Prostate gland (tissue), 2 donors: ENCODE measurements at regions of chr1 and their contacts with region 1.

Region 1: DNA sequence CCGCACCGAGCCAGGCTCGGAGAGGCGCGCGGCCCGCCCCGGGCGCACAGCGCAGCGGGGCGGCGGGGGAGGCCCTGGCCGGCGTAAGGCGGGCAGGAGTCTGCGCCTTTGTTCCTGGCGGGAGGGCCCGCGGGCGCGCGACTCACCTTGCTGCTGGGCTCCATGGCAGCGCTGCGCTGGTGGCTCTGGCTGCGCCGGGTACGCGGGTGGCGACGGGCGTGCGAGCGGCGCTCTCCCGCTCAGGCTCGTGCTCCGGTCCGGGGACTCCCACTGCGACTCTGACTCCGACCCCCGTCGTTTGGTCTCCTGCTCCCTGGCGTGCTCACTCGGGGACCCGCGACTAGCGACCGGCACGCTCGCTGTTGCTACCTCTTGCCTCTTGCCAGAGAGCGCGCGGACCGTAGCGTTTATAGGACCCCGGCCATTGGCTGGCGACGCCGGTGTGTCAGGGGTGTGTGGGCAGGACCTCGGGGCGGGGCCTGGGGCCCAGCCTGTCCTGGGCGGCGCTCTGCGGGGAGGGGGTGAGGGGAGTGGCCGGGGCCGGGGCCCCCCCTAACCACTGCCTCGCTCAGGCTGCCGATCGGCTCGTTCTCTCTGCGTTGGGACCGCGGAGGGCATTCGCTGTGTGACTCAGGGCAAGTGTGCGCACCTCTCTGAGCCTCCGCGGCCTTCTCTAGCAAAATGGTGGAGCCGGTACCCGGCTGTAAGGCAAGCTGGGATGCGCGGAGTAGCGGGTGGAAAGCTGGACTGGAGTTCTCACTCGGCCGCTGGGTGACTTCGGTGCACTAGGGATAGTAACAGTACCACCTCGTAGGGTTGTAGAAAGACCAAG is at the start of gene SLC2A1:
- DNase-seq: peak; percentile 95
- H3K4me3 ChIP-seq: peak within 1 kb of the TSS; percentile 80 to 87
- H3K27ac ChIP-seq: peak within 1 kb of the TSS; percentile 86 to 93
- H3K4me1 ChIP-seq: peaks cover 2% of the 10 kb centered on the region
- H3K27me3 ChIP-seq: no peaks in the 10 kb centered on the region
- CTCF ChIP-seq: peak in 2 of 4 experiments; percentile 6 to 11
- POLR2A ChIP-seq: peak; percentile 99
- total RNA-seq, gene SLC2A1: 83.9 to 159 TPM

Region 2: GRCh38 chr1:42924082-42924850 is 34.4 kb before region 1 on chr1:
- intact Hi-C with region 1: loop called (anchors 2 kb)
- DNase-seq: peak; percentile 92
- H3K4me3 ChIP-seq: peak overlapping the region; percentile 73 to 85
- H3K27ac ChIP-seq: peak overlapping the region; percentile 89 to 90
- H3K4me1 ChIP-seq: no peaks in the 10 kb centered on the region
- H3K27me3 ChIP-seq: no peaks in the 10 kb centered on the region
- CTCF ChIP-seq: peak in 2 of 4 experiments; percentile 38 to 47
- POLR2A ChIP-seq: peak; percentile 88